HEK293 (cell line): ENCODE measurements at regions of chr7 and their contacts with region 1.

Region 1: DNA sequence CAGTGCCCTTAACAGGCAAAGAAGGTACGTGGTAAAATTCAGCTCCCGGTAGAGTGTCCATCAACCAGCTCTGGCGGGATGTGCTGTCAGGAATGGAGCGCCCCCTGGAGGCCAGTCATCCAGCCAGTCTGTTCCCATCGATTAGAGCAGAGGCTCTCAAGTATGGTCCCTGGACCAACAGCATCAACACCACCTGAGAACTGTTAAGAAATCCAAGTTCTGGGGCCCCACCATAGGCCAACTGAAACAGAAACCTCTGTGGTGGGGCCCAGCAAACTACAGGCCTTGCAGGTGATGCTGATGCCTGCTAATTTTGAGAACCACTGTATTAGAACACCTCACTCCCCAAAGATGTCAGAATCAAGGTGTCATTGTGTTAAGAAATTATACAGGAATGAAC is 109.2 kb downstream of the DPY19L1 start:
- H3K4me3 ChIP-seq: no peak overlapping the region
- H3K27ac ChIP-seq: no peak overlapping the region
- H3K4me1 ChIP-seq: no peaks in the 10 kb centered on the region
- CTCF ChIP-seq: no peak

Region 2: DNA sequence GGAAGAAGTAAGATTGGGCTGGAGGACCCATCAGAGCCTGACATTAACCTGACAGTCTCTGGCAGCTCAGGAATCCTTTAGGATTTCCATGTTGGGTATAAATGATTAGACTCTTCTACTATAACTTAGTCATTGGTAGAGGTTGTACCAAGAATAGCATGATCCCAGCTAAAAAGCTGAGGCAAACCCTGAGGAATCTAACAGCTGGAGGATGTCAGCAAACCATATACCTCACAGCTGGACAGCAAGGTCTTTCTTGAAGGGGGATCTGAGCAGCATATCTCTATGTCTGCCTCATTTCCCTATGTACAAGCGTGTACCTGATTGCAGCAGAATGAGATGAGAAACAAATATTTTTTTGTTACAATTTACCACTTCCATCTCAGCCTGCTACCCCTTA is 166.8 kb before region 1 on chr7:
- CTCF ChIA-PET with region 1: interaction called, 10 read pairs
- POLR2A ChIA-PET with region 1: no interaction called
- H3K4me3 ChIP-seq: no peak overlapping the region
- H3K27ac ChIP-seq: no peak overlapping the region
- H3K4me1 ChIP-seq: no peaks in the 10 kb centered on the region
- CTCF ChIP-seq: no peak

Region 3: DNA sequence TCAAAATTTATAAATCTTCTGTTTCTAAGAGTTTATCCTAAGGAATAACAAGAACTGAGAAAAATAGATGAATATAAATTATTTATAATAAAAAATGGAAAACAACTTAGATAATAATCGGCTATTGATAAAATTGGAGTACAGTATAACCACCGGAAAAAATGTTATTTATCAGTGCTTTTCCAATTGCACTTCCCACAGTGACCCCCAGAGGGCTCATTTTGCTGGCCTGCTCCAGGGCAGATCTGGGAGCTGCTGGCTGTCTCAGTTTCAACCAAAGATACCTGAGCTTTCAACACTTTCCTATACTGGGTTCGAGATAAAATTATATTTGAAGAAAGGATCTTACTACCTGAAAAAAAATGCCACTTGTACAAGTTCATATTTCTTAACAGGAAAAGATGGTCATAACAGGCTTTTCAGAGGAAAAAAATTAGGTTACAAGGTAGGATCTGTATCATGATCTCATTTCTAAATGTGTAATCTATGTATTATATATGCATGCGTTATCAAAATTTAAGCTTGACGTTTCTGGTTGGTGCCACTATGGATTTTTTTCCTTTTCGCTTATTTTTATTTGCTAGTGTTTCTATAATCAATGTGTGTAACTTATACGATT is 104.3 kb before region 1 on chr7:
- CTCF ChIA-PET with region 1: interaction called, 19 read pairs
- POLR2A ChIA-PET with region 1: no interaction called
- H3K4me3 ChIP-seq: no peak overlapping the region
- H3K27ac ChIP-seq: no peak overlapping the region
- H3K4me1 ChIP-seq: no peaks in the 10 kb centered on the region
- CTCF ChIP-seq: no peak

Region 4: GRCh38 chr7:35003679-35004303 is 75.7 kb after region 1 on chr7:
- CTCF ChIA-PET with region 1: no interaction called
- POLR2A ChIA-PET with region 1: no interaction called
- H3K4me3 ChIP-seq: no peak overlapping the region
- H3K27ac ChIP-seq: peak overlapping the region; percentile 75
- H3K4me1 ChIP-seq: peaks cover 8% of the 10 kb centered on the region; the same call in 1 of the 2 replicates
- CTCF ChIP-seq: no peak